BJ (cell line): ENCODE measurements at regions of chr2 and their contacts with region 1.

Region 1: DNA sequence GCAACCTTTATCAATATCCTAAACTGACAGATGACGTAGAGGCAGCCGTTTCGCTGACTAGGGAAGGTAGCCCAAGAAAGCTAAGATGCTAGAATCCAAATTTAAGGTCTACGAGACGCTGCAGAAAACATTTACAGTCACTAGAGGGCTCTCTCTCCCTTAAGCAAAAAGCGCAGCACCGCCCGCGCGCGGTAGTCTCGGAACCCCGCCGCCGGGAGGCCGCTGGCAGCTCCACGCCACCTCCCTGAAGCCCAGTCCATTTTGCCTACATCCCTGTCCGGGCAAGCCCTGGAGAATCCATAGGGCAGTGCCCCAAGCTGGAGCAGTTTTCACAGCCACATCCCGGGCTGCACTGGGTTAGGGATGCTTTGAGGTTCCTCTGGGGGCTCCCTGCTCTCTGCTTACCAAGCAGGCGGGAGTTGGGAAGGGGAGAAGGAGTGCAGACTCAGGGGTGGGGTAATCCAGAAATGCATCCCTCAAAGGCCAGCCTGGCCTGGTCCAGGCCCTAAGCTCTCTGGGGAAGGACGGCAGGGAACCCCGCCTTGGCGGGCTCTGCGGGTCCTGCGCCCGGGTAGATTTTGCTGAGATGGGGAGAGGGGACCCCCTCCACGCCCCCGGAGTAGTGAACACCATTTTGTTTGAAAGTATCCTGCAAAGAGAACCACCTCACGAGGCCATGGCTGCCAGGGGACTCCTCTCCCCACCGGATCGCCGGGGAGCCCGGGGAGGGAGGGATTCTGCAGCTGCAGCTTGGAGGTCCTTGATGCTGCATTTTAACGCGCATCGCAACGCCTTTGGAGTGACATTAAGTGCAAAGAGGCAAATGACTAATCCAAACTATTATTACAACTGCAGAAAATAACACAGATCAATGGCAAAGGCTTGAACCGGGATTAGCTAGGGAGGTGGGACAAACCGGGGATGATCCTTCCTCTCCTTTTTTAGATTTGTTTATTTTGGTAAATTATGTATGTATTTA is 1.3 kb upstream of the DPYSL5 start:
- DNase-seq: peak; percentile 6
- H3K4me3 ChIP-seq: no peak overlapping the region
- H3K27me3 ChIP-seq: peaks cover 58% of the 10 kb centered on the region
- CTCF ChIP-seq: peak; percentile 83

Region 2: GRCh38 chr2:26724004-26724750 is 122.4 kb before region 1 on chr2:
- CTCF ChIA-PET with region 1: no interaction called
- POLR2A ChIA-PET with region 1: no interaction called
- DNase-seq: no peak
- H3K4me3 ChIP-seq: no peak overlapping the region
- H3K27me3 ChIP-seq: 0 out of 2 replicates have a peak, but pooled peaks cover 3% of the 10 kb centered on the region
- CTCF ChIP-seq: no peak

Region 3: DNA sequence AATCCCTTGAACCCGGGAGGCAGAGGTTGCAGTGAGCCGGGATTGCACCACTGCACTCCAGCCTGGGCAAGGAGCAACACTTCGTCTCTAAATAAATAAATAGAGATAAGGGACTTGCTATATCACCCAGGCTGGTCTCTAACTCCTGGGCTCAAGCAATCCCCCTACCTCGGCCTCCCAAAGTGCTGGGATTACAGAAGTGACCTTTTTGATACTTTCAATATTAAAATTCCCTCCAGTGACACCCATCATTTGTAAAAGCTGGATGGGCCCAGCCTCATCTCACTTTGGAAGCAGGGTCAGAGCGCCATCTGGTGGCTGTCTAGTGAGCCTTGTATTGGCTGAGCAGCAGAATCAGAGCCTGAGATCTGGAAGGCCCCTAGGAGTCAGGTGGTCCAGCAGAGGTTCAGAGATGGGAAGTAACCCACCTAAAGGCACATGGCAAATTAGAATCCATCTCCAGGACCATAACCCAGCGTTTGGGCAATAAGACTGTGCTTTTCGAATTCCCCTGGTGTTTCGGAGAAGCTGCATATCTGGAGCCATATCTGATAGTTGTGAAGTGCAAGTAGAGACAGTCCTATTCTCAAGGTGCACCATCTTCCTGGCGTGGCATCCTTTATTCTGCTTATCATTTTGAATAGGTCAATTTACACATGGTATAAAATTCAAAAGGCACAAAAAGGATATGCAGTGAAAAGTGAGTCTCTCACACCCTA is 100.8 kb before region 1 on chr2:
- CTCF ChIA-PET with region 1: no interaction called
- POLR2A ChIA-PET with region 1: no interaction called
- DNase-seq: no peak
- H3K4me3 ChIP-seq: no peak overlapping the region
- H3K27me3 ChIP-seq: no peaks in the 10 kb centered on the region; the same call in 1 of the 2 replicates
- CTCF ChIP-seq: peak; percentile 90

Region 4: GRCh38 chr2:26861610-26862224 is 15.1 kb after region 1 on chr2:
- CTCF ChIA-PET with region 1: interaction called, 23 read pairs
- POLR2A ChIA-PET with region 1: no interaction called
- DNase-seq: no peak
- H3K4me3 ChIP-seq: no peak overlapping the region
- H3K27me3 ChIP-seq: peaks cover 12% of the 10 kb centered on the region
- CTCF ChIP-seq: no peak

Region 5: GRCh38 chr2:26942543-26943295 is 96.1 kb after region 1 on chr2:
- CTCF ChIA-PET with region 1: interaction called, 154 read pairs
- POLR2A ChIA-PET with region 1: no interaction called
- DNase-seq: no peak
- H3K4me3 ChIP-seq: no peak overlapping the region
- H3K27me3 ChIP-seq: peaks cover 15% of the 10 kb centered on the region
- CTCF ChIP-seq: peak; percentile 84

Region 6: GRCh38 chr2:27016801-27017325 is 170.2 kb after region 1 on chr2:
- CTCF ChIA-PET with region 1: interaction called, 51 read pairs
- POLR2A ChIA-PET with region 1: no interaction called
- DNase-seq: no peak
- H3K4me3 ChIP-seq: no peak overlapping the region
- H3K27me3 ChIP-seq: no peaks in the 10 kb centered on the region
- CTCF ChIP-seq: peak; percentile 73